Head of caudate nucleus (tissue), 42 donors: ENCODE measurements at regions of chr4 and their contacts with region 1.

Region 1: GRCh38 chr4:8917868-8918783 is 46.5 kb upstream of the HMX1 start:
- DNase-seq: peak; percentile 58 to 92 (median 80)

Region 2: GRCh38 chr4:8615921-8616785 is 302.0 kb before region 1 on chr4:
- intact Hi-C with region 1: loop called (anchors 10 kb)
- DNase-seq: no peak

Region 3: DNA sequence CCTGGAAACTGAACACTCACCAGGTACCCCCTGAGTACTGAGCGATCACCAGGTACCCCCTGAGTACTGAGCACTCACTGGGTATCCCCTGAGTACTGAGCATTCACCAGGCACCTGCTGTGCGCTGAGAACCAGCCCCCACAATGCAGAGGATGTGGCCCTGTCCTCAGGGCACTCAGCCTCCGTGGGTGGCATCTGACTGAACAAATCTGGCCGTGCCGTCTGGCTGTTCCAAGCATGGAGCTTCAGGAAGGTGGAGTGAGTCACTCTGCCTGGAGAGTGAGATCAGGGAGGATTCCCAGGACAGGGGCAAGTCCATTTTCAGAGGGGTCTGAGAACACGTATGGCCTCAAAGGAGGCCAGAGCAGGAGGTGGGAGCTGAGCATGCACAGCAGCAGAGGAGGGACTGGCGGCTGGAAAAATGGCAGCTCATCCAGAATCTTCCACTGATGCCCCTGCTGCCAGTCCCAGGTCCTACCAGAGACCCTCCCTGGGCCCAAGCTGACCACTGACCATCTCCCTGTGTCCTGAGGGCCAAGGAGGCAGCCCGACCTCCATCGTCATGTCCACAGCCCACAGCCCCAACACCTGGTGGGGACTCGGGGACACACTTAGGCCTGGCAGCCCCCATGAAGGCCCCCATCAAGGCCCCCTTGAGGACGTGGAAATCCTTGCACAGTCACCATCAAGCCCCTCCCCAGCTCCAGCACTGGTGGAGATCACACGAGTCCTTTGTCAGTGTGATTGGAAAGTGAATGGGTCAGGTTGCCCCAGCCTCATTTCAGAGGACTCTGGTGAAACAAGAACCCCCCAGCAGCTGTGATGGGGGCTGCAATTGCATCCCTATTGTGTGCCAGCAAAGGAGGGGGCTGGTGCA is 140.6 kb before region 1 on chr4:
- intact Hi-C with region 1: no loop called
- DNase-seq: no peak